A549 (cell line): ENCODE measurements at regions of chr14 and their contacts with region 1.

Region 1: DNA sequence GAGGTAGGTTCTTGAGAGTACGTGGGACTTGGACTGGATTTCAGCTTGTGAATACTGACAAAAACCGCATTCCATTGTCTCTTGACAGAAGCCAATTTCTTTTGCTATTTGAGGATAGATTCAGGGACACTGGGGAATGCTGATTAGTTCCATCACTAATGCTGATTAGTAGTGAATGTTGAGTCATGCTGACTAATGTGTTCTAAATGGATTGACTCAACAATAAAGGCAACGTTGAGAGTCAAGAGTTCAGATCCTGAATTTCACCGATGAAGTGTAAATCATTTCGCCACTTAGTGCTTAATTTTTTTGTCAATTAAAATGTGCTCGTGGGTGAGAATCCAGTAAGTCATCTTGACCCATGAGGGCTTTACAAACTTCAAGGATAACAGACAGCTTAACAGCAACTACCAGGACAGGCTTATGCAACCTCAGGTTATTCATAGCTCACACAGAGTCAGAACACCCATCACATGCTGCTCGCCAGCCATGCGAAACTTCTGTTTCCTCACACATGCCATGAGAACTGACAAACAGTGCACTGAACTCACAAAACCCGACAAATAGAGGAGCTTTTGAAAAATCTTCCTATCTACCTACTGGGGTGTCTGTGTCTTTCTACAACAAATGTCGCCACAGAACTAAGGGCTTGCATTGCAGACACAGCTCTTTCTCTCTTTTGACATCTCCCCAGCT is 316.5 kb downstream of the ZFP36L1 start:
- DNase-seq: peak in 1 of 2 experiments; percentile 51
- ATAC-seq: peak; percentile 44 to 65; a peak in 3 of 6 replicates
- H3K4me3 ChIP-seq: no peak overlapping the region
- H3K27ac ChIP-seq: peak overlapping the region; percentile 62 to 83
- H3K4me1 ChIP-seq: peaks cover 39% of the 10 kb centered on the region
- CTCF ChIP-seq: no peak
- EP300 ChIP-seq: no peak
- POLR2A ChIP-seq: no peak
- RAD21 ChIP-seq: no peak

Region 2: DNA sequence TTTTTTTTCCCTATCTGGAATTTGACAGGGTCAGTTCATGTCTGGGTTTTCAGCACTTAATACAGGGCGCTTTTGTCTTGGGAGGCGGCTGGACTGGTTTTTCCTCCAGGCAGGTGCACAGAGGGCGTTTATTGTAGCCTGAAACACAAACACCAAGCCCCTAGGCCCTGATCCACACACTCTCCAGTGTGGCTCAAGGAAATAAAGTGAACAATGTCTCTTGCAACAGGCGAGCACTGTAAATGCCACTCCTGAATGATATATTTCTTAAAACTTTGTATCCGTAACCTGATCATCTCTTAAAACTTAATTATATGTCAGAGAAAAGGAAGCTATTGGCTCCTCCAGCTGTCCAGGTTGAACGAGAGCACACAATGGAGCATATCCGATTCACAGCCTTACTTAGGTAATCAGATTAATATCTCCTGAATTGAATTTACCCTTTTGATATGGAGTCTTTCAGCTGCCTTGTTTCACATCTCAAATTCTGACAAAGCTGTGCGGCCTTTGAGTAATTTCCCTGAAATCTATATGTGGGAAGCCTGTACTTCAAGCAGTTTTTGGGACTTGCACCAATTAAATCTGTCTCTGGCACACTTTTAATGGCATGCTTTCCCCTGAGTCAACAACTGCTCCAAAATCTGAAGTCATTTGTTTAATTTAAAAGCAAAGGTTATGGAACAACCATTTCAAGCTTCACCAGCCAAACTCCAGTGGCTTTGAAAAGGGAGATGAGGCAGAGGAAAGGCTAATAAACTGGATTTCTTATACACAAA is 169.2 kb before region 1 on chr14:
- CTCF ChIA-PET with region 1: no interaction called
- POLR2A ChIA-PET with region 1: no interaction called
- DNase-seq: no peak
- ATAC-seq: no peak
- H3K4me3 ChIP-seq: no peak overlapping the region
- H3K27ac ChIP-seq: peak overlapping the region in 1 of 2 experiments; percentile 19; a peak in 2 of 6 replicates
- H3K4me1 ChIP-seq: no peaks in the 10 kb centered on the region
- CTCF ChIP-seq: no peak
- EP300 ChIP-seq: no peak
- POLR2A ChIP-seq: no peak
- RAD21 ChIP-seq: no peak

Region 3: GRCh38 chr14:68464711-68465110 is 11.6 kb before region 1 on chr14:
- CTCF ChIA-PET with region 1: no interaction called
- POLR2A ChIA-PET with region 1: no interaction called
- DNase-seq: peak; percentile 76 to 94
- ATAC-seq: peak; percentile 74; a peak in 5 of 6 replicates
- H3K4me3 ChIP-seq: no peak overlapping the region
- H3K27ac ChIP-seq: peak overlapping the region; percentile 93 to 100
- H3K4me1 ChIP-seq: peaks cover 100% of the 10 kb centered on the region
- CTCF ChIP-seq: no peak
- EP300 ChIP-seq: peak; percentile 89 to 95; a peak in 4 of 5 replicates
- POLR2A ChIP-seq: no peak
- RAD21 ChIP-seq: peak; percentile 39 to 72

Region 4: GRCh38 chr14:68548194-68549056 is 72.1 kb after region 1 on chr14:
- CTCF ChIA-PET with region 1: no interaction called
- POLR2A ChIA-PET with region 1: interaction called, 12 read pairs
- DNase-seq: peak; percentile 80 to 89
- ATAC-seq: peak; percentile 81 to 86
- H3K4me3 ChIP-seq: no peak overlapping the region
- H3K27ac ChIP-seq: peak overlapping the region; percentile 90 to 98
- H3K4me1 ChIP-seq: peaks cover 59% of the 10 kb centered on the region
- CTCF ChIP-seq: no peak
- EP300 ChIP-seq: peak in 1 of 2 experiments; percentile 80; a peak in 3 of 5 replicates
- POLR2A ChIP-seq: no peak
- RAD21 ChIP-seq: peak; percentile 15 to 35; a peak in 4 of 5 replicates